MCF 10A (cell line): ENCODE measurements at regions of chr7 and their contacts with region 1.

Region 1: GRCh38 chr7:76179686-76180085 is 22.0 kb upstream of the SRRM3 start:
- DNase-seq: no peak
- H3K4me3 Mint-ChIP-seq: no peak overlapping the region
- H3K27ac Mint-ChIP-seq: no peak overlapping the region
- H3K4me1 Mint-ChIP-seq: no peaks in the 10 kb centered on the region
- H3K27me3 Mint-ChIP-seq: no peaks in the 10 kb centered on the region
- CTCF ChIP-seq: no peak

Region 2: DNA sequence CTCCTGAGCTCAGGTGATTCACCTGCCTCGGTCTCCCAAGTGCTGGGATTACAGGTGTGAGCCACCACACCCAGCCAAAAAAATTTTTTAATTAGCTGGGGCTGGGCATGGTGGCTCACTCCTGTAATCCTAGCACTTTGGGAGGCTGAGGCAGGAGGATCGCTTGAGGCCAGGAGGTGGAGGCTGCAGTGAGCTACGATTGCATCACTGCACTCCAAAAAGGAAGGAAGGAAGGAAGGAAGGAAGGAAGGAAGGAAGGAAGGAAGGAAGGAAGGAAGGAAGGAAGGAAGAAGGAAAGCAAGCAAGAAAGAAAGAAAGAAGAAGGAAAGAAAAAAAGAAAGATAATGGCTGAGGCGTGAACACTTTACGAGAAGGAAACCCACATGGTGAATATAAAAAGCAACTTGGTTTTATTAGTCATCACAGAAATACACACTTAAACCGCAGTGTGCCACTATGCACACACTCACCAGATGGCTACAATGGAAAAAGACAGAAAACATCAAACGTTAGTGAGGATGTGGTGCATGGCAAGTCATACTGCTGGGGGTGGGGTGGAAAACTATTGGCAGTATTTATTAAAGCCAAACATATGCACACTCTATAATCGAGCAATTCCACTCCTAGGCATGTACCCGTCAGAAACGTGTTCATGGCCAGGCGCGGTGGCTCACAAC is 403.3 kb before region 1 on chr7:
- CTCF ChIA-PET with region 1: no interaction called
- POLR2A ChIA-PET with region 1: no interaction called
- intact Hi-C with region 1: no loop called
- DNase-seq: peak; percentile 59
- H3K4me3 Mint-ChIP-seq: no peak overlapping the region
- H3K27ac Mint-ChIP-seq: no peak overlapping the region
- H3K4me1 Mint-ChIP-seq: peaks cover 12% of the 10 kb centered on the region
- H3K27me3 Mint-ChIP-seq: peaks cover 26% of the 10 kb centered on the region
- CTCF ChIP-seq: peak; percentile 17

Region 3: DNA sequence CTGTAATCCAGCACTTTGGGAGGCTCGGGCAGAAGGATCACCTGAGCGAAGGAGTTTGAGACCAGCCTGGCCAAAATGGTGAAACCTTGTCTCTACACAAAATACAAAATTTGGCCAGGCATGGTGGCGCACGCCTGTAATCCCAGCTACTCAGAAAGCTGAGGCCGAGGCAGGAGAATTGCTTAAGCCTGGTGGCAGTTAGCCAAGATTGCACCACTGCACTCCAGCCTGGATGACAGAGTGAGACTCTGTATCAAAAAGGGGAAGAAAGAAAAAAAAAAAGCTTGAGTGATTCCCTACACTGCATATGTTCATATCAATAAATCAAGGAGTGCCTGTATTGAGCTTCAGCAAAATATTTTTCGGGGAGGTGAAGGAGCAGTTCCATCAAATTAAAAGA is 23.7 kb before region 1 on chr7:
- CTCF ChIA-PET with region 1: interaction called, 10 read pairs
- POLR2A ChIA-PET with region 1: no interaction called
- intact Hi-C with region 1: no loop called
- DNase-seq: peak; percentile 85
- H3K4me3 Mint-ChIP-seq: no peak overlapping the region
- H3K27ac Mint-ChIP-seq: no peak overlapping the region
- H3K4me1 Mint-ChIP-seq: peaks cover 10% of the 10 kb centered on the region
- H3K27me3 Mint-ChIP-seq: no peaks in the 10 kb centered on the region
- CTCF ChIP-seq: no peak

Region 4: DNA sequence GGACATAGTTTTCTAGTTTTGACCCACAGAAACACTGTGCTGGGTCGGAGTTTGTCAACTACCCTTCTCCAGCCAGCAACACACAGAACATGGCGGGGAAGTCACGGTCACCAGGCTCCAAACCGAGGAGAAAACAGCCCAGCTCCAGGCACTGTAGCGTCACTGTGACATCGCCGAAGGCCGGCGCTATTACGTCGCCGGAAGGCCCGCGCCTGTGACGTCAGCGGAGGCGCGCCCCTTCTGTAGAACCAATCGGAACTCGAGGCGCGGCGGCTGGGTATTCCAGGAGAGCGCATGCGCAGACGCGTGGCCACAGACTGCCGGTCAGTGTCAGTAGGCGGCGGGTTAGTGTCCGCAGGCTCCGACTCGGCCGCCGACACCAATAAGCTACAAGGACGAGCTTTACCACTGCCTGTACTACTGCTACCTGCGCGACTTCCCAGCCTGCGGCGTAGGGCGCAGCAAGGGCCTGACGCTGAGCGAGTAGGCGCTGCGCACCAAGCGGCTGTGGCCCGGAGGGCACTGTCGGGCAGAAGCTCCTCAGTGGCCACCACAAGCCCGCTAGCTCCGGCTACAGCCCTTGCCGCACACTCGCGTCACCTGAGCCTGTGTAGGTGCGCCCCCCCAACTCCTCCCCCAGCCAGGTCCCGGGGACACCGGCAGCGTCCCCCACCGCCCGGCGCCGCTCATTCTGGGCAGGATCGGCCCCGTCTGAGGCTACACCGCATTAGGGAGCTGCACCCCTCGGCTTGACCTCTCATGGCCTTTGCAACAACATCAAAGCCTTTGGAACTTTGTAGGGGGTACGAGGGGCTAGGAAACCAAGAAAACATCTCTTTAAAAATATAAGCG is 13.1 kb before region 1 on chr7:
- CTCF ChIA-PET with region 1: interaction called, 21 read pairs
- POLR2A ChIA-PET with region 1: no interaction called
- intact Hi-C with region 1: no loop called
- DNase-seq: peak; percentile 95
- H3K4me3 Mint-ChIP-seq: peak overlapping the region; percentile 74
- H3K27ac Mint-ChIP-seq: peak overlapping the region; percentile 94
- H3K4me1 Mint-ChIP-seq: no peaks in the 10 kb centered on the region
- H3K27me3 Mint-ChIP-seq: no peaks in the 10 kb centered on the region
- CTCF ChIP-seq: no peak

Region 5: DNA sequence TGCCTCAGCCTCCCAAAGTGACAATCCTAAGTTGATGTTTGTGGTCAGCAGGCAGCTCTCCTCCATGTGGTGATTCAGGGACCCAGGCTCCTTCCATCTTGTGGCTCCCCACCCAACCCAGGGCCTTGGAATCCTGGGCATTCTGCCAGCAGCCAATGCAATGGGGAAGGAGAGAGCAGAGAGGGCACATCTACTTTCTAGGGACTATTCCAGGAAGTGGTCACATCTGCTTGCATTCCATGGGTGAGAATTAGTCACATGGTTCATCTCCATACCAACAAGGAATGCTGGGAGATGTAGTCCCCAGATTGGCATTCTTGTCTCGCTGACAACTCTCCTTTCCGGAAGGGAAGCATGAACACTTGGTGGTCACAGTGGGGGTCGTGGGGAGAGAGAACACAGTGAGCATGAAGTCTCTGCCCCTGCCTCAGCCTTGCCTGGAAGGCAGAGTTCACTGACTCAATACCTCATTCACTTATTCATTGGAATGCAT is 12.1 kb after region 1 on chr7:
- CTCF ChIA-PET with region 1: interaction called, 20 read pairs
- POLR2A ChIA-PET with region 1: interaction called, 3 read pairs
- intact Hi-C with region 1: no loop called
- DNase-seq: peak; percentile 18
- H3K4me3 Mint-ChIP-seq: no peak overlapping the region
- H3K27ac Mint-ChIP-seq: no peak overlapping the region
- H3K4me1 Mint-ChIP-seq: no peaks in the 10 kb centered on the region
- H3K27me3 Mint-ChIP-seq: peaks cover 28% of the 10 kb centered on the region
- CTCF ChIP-seq: no peak

Region 6: GRCh38 chr7:76262683-76263402 is 83.2 kb after region 1 on chr7:
- CTCF ChIA-PET with region 1: interaction called, 50 read pairs
- POLR2A ChIA-PET with region 1: interaction called, 7 read pairs
- intact Hi-C with region 1: loop called (anchors 1 kb)
- DNase-seq: peak; percentile 73
- H3K4me3 Mint-ChIP-seq: no peak overlapping the region
- H3K27ac Mint-ChIP-seq: peak overlapping the region; percentile 36
- H3K4me1 Mint-ChIP-seq: no peaks in the 10 kb centered on the region
- H3K27me3 Mint-ChIP-seq: peaks cover under 1% of the 10 kb centered on the region
- CTCF ChIP-seq: peak; percentile 75

Region 7: DNA sequence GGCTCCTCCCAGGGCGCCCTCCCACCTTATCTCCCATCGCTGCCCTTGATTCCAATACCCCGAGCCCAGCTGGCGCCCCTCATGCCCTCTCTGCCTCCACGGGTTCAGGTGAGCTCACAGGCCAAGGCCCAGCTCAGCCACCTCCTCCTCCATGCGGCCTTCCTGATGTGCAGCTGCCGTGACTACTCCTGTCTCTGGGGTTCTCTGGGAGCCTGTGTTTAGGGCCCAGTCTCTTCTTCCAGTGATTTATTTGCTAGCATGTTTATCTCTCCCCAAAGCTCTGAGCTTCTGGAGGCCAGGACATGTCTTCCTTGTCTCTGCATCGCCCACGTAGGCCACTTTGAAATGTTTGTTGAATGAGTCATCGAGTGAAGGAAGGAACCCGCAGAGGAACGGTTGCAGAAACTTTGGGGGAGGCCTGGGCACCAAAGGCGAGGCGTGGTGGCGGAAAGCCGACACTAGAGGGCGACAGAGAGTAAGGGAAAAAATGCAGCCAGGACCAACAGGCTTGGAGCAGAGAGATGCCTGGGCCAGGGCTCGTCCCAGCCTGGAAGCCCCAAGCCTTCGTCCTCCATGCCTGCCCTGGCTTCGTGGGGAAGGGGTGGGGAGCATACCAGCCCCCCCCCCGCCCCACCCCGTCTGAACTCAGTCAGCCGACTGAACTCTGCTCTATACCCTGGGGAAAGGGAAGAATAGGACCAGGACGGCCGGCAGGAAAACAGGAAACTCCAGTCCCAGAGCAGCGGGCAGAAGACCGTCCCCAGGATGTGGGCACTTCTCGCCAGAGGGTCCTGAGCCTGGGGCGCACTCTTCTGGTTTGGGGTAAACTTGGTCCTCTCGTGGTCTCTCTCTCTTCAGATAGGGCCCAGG is 111.9 kb after region 1 on chr7:
- CTCF ChIA-PET with region 1: interaction called, 41 read pairs
- POLR2A ChIA-PET with region 1: interaction called, 14 read pairs
- intact Hi-C with region 1: loop called (anchors 1 kb)
- DNase-seq: peak; percentile 99
- H3K4me3 Mint-ChIP-seq: peak overlapping the region; percentile 29
- H3K27ac Mint-ChIP-seq: peak overlapping the region; percentile 84
- H3K4me1 Mint-ChIP-seq: peaks cover 41% of the 10 kb centered on the region
- H3K27me3 Mint-ChIP-seq: no peaks in the 10 kb centered on the region
- CTCF ChIP-seq: peak; percentile 89